Activated CD8-positive, alpha-beta T cell treated with anti-CD3 and anti-CD28 coated beads for 36 hours (primary cell): ENCODE measurements at regions of chr9 and their contacts with region 1.

Region 1: GRCh38 chr9:91433180-91433579 is 9.5 kb upstream of the NFIL3 start:
- DNase-seq: peak; percentile 26
- ATAC-seq: peak; percentile 87
- H3K4me3 Mint-ChIP-seq: no peak overlapping the region
- H3K27ac Mint-ChIP-seq: no peak overlapping the region
- H3K4me1 Mint-ChIP-seq: peaks cover 10% of the 10 kb centered on the region
- H3K27me3 Mint-ChIP-seq: peaks cover 19% of the 10 kb centered on the region
- CTCF ChIP-seq: peak; percentile 40

Region 2: GRCh38 chr9:91036826-91037510 is 396.2 kb before region 1 on chr9:
- CTCF ChIA-PET with region 1: interaction called, 19 read pairs
- POLR2A ChIA-PET with region 1: interaction called, 3 read pairs
- intact Hi-C with region 1: loop called (anchors 5 kb)
- DNase-seq: peak; percentile 85
- ATAC-seq: peak; percentile 89
- H3K4me3 Mint-ChIP-seq: peak overlapping the region; percentile 37
- H3K27ac Mint-ChIP-seq: peak overlapping the region; percentile 69
- H3K4me1 Mint-ChIP-seq: peaks cover 52% of the 10 kb centered on the region
- H3K27me3 Mint-ChIP-seq: peaks cover under 1% of the 10 kb centered on the region
- CTCF ChIP-seq: peak; percentile 74

Region 3: DNA sequence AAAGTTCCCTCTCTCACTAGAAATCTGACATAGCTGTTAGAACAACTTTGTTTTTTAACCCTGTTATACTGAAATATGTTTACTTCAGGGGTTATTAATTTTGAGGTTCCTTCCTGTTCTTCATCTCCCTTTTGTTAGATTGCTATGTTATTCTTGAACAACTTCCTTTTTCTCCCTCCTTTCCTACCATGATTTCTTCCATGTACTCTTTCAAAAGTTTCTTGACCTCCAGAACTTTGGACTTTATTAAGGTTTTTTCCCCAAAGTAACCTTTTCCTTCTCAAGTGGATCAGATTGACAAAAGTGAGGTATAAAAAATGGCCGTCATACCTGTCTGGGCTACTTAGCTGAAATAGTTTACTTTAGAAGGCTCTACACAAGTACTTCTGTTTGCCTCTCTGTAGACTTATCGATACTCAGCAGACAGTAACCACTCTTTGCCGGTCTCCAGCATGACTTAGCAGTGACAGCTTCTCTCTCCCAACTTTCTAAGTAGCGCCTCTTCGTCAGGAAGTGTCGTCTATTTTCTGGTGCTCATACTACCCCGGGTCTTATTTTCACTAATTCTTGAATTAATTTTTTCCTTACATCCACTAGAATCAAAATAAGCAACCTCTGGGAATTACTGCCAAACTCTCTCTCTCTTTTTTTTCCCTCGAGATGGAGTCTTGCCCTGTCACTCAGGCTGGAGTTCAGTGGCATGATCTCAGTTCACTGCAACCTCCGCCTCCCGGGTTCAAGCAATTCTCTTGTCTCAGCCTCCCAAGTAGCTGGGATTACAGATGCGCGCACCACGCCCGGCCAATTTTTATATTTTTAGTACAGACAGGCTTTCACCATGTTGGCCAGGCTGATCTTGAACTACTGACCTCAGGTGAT is 29.3 kb before region 1 on chr9:
- CTCF ChIA-PET with region 1: interaction called, 3 read pairs
- POLR2A ChIA-PET with region 1: no interaction called
- intact Hi-C with region 1: loop called (anchors 2 kb)
- DNase-seq: no peak
- ATAC-seq: no peak
- H3K4me3 Mint-ChIP-seq: no peak overlapping the region
- H3K27ac Mint-ChIP-seq: no peak overlapping the region
- H3K4me1 Mint-ChIP-seq: peaks cover 12% of the 10 kb centered on the region
- H3K27me3 Mint-ChIP-seq: peaks cover 5% of the 10 kb centered on the region
- CTCF ChIP-seq: no peak